Sigmoid colon (tissue), 7 donors: ENCODE measurements at regions of chr20 and their contacts with region 1.

Region 1: DNA sequence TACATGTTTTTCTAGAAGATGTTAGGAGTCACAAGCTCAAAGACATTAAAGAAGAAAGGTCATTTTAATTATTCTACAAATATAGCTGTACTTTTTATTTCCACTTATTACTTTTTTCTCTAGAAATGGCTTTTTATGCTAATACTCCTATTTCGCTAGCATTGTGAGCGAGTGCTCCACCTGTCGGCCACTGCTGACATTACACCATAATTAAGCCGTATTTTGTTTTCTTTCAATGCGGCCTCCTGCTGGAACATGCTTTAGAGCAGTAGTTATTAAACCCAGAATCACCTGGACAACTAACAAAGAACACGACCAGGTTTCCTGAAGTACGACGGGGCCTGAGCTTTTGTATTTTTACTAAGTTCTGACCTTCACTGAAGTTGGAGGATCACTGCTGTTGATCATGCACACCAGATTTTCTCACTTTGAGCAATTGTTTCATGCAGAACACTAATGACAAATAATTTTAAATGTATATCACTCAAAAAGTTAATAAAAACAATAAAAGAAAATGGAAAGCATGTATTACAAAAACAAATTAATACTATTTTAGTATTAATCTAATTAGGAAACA is 74.1 kb upstream of the PAK5 start:
- DNase-seq: no peak
- H3K4me3 ChIP-seq: no peak overlapping the region
- H3K27ac ChIP-seq: no peak overlapping the region
- H3K4me1 ChIP-seq: no peaks in the 10 kb centered on the region
- H3K27me3 ChIP-seq: peaks cover 0 to 6% (median 0%) of the 10 kb centered on the region in 3 donors
- CTCF ChIP-seq: peak in 3 of 4 experiments; percentile 37 to 71 (median 64)
- EP300 ChIP-seq: no peak
- POLR2A ChIP-seq: no peak

Region 2: DNA sequence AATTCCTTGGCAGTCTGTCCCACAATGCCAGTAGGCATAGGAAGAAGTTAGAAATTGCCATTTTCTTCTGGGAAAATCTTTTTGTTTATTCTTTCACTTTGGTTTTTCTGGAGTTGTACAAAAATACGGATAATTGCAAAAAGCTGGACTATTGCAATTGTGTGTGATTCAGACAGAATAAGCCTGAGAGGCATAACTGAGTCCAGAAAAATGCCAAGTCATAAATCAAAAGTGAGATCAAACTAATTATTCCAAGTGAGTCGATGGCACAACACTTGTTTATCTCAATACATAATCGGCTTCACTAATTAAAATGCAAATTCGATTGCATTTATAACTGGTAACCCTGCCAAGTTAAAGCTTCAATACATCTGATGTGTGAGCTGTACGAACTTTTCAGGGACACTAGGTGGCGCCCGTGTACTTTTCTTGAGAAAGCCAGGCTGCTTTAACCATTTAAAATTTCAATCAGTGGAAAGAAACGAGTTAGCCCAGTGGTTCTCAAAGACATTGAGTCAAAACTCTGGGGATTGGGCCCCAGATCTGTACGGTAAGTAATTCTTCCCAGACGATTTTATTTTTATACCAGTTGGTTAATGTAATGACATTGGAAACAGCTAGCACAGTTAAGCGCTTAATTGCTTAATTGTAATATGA is 296.0 kb before region 1 on chr20:
- intact Hi-C with region 1: loop called (anchors 2 kb)
- DNase-seq: no peak
- H3K4me3 ChIP-seq: no peak overlapping the region
- H3K27ac ChIP-seq: no peak overlapping the region
- H3K4me1 ChIP-seq: no peaks in the 10 kb centered on the region
- H3K27me3 ChIP-seq: no peaks in the 10 kb centered on the region
- CTCF ChIP-seq: peak; percentile 37 to 76 (median 66)
- EP300 ChIP-seq: no peak
- POLR2A ChIP-seq: no peak

Region 3: GRCh38 chr20:9857403-9857802 is 55.5 kb before region 1 on chr20:
- intact Hi-C with region 1: loop called (anchors 5 kb)
- DNase-seq: no peak
- H3K4me3 ChIP-seq: no peak overlapping the region
- H3K27ac ChIP-seq: no peak overlapping the region
- H3K4me1 ChIP-seq: no peaks in the 10 kb centered on the region
- H3K27me3 ChIP-seq: no peaks in the 10 kb centered on the region
- CTCF ChIP-seq: no peak
- EP300 ChIP-seq: no peak
- POLR2A ChIP-seq: no peak

Region 4: GRCh38 chr20:9945408-9945807 is 32.5 kb after region 1 on chr20:
- intact Hi-C with region 1: no loop called
- DNase-seq: no peak
- H3K4me3 ChIP-seq: no peak overlapping the region
- H3K27ac ChIP-seq: no peak overlapping the region
- H3K4me1 ChIP-seq: no peaks in the 10 kb centered on the region
- H3K27me3 ChIP-seq: no peaks in the 10 kb centered on the region
- CTCF ChIP-seq: no peak
- EP300 ChIP-seq: no peak
- POLR2A ChIP-seq: no peak

Region 5: DNA sequence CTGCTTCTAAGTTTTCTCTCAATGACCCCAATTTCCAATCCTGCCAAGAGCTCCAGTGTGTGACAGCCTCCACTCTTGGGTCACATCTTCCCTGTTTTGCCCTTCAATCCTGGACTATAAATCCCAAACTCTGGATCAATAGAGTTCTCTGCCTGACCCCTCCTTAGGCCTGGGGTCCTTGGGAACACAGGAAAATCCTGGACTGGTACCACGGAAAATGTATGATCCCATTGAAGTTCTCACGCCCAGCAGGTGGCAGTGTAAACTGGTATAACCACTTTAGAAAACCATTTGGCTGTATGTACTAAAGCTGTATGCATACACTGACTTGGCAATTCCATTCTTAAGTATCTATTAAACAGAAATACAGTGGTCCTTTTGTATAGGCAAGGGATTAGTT is 403.6 kb after region 1 on chr20:
- intact Hi-C with region 1: no loop called
- DNase-seq: no peak
- H3K4me3 ChIP-seq: no peak overlapping the region
- H3K27ac ChIP-seq: no peak overlapping the region
- H3K4me1 ChIP-seq: no peaks in the 10 kb centered on the region
- H3K27me3 ChIP-seq: no peaks in the 10 kb centered on the region
- CTCF ChIP-seq: no peak
- EP300 ChIP-seq: no peak
- POLR2A ChIP-seq: no peak